Natural killer cell (primary cell): ENCODE measurements at regions of chr4 and their contacts with region 1.

Region 1: DNA sequence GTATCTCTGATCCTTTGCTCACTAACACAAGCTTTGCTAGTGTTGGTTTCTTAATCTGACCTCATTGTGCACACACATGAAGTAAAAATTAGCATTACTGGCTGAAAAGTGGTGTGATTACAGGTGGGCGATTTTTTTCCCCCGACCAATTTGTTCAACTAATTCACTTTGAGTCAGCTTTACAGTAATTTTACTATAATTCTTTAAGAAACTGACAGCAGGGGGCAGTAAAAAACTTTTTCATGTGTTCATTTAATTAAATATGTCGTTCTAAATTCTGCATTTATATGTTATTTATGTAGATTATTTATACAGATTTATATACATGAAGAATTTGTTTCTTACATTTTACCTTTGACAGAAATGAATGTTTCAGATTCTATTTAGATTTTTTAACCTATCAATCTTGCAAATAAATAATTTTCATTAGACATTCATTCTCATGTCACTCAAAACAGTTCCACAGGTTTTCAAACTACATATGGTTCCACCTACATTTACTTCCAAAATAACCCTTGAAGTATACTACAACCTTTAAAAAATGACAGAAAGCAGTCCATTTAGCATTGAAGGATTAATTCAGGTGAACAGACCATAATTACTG is 17.5 kb downstream of the PALLD start:
- DNase-seq: peak in 1 of 2 donors; percentile 64
- ATAC-seq: no peak
- H3K4me3 ChIP-seq: no peak overlapping the region
- H3K4me3 Mint-ChIP-seq: no peak overlapping the region
- H3K27ac ChIP-seq: no peak overlapping the region
- H3K27ac Mint-ChIP-seq: no peak overlapping the region
- H3K4me1 ChIP-seq: peaks cover 13% of the 10 kb centered on the region
- H3K4me1 Mint-ChIP-seq: peaks cover 0 to 4% of the 10 kb centered on the region in 2 donors
- H3K27me3 ChIP-seq: no peaks in the 10 kb centered on the region
- H3K27me3 Mint-ChIP-seq: peaks cover 0 to 7% of the 10 kb centered on the region in 2 donors
- CTCF ChIP-seq: peak; percentile 56

Region 2: DNA sequence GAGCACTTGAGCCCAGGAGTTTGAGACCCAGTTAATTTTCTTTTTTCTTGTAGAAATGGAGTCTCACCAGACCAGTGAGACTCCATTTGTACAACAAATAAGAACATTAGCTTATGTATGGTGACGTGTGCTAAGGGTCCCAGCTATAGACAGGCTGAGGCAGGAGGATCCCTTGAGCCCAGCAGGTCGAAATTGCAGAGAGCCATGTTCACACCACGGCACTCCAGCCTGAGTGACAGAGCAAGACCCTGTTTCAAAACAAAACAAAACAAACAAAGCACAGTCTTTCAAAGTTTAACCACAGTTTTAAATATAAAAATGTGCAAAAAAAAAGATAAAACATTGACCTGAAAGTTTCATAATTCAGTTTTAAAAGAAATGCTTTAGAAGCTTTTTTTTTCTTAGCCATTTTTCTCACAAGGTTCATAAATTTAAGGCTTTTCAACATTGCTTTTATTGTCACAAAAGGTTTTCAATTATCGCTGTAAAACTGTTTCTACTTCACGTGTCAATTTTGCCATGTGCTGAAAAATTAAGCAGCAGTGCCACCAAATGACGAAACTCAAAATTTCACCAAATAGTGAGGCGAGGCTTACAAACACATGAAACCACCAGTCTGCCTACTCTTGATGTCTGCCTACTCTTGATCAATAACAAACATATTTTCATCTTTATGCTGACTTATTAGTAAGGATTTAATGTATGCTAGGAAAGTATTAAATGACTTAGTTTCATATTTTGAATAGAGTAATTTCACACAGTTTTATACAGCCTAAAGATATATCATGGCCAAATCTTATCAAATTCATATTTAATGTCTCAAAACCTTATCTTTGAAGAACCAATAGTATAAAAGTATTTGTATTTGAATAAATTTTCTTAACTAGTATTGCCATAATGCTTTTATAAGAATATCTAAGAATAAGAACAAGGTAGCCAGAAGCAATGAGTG is 971.7 kb after region 1 on chr4:
- intact Hi-C with region 1: loop called (anchors 5 kb)
- DNase-seq: peak in 1 of 2 donors; percentile 63
- ATAC-seq: peak in 2 of 3 donors; percentile 40 to 61
- H3K4me3 ChIP-seq: no peak overlapping the region
- H3K4me3 Mint-ChIP-seq: no peak overlapping the region
- H3K27ac ChIP-seq: no peak overlapping the region
- H3K27ac Mint-ChIP-seq: no peak overlapping the region
- H3K4me1 ChIP-seq: no peaks in the 10 kb centered on the region
- H3K4me1 Mint-ChIP-seq: peaks cover 0 to 4% of the 10 kb centered on the region in 2 donors
- H3K27me3 ChIP-seq: no peaks in the 10 kb centered on the region
- H3K27me3 Mint-ChIP-seq: no peaks in the 10 kb centered on the region
- CTCF ChIP-seq: peak; percentile 60